Caco-2 (cell line): ENCODE measurements at regions of chr3 and their contacts with region 1.

Region 1: DNA sequence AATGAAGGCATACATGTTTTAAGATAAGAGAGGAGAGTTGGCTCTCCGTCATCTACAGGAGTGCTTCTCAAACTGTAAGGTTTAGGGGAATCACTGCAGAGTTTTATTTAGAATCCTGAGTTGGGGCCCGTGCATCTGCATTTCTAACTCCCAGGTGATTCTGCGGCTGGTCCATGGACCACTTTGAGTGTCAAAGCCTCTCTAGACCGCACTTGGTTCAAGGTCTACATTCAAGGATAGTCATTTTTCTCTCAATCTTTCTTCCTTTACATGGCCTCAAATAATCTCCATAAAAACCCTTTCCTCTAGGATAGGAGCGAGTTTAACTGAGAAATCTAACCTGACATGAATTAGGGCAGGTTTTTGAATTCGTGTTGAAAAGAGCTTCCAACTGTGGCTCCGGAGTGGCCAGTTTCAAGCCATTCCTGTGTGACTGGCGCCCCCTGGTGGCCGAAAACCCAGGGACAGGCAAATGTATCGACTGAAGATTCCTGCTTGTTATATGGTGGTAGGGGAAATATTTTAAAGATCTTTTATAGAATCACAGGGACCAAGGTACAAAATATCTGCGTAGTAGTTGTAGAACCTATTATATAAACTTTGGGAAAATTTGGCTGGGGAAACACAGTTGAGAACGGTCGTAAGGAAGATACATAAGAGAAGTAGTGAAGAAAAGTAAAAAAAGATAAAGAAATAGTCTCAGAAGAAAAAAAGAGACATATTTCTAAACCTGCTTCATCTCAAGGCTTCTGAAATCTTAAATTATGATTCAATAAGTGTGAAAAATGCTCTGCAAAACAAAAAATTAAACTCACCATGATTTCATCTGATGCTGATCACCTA is 11.9 kb downstream of the GABRR3 start:
- DNase-seq: peak; percentile 75 to 89
- H3K4me3 ChIP-seq: no peak overlapping the region
- H3K4me3 Mint-ChIP-seq: no peak overlapping the region
- H3K27ac Mint-ChIP-seq: no peak overlapping the region
- H3K4me1 ChIP-seq: no peaks in the 10 kb centered on the region
- H3K4me1 Mint-ChIP-seq: peaks cover 7% of the 10 kb centered on the region
- H3K27me3 ChIP-seq: no peaks in the 10 kb centered on the region
- H3K27me3 Mint-ChIP-seq: peaks cover 4% of the 10 kb centered on the region
- CTCF ChIP-seq: peak; percentile 87 to 94

Region 2: DNA sequence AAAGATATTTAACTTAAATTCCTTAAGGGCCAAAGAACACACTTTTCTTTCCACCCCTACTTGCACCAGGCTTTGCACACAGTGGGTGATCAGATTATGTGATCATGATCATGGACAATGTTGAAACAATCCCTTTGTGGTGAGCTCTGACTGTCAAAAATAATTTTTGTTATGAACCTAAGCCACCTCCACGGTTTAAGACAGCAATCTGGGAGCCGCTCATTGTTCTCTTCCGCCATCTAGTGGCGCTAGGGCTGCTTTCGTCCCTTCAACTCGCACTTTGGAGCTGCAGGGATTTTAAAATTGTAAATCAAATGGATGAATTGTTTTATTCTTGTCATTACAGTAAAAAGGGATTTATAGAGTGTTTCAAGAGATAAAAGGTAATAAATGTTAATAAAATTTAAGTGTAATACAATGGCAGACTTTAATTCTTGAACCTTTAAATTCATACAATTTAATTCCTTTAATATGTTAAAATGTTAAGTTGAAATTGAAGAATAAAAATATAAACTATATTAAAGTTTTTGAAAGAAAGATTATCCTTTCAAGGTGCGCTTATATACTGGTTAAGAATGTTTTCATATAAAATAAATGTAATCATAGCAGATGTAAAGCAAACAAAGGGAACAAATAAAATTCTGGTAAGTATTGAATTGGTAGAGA is 303.9 kb before region 1 on chr3:
- CTCF ChIA-PET with region 1: interaction called, 4 read pairs
- POLR2A ChIA-PET with region 1: no interaction called
- intact Hi-C with region 1: loop called (anchors 5 kb)
- DNase-seq: peak; percentile 57 to 69
- H3K4me3 ChIP-seq: no peak overlapping the region
- H3K4me3 Mint-ChIP-seq: no peak overlapping the region
- H3K27ac Mint-ChIP-seq: no peak overlapping the region
- H3K4me1 ChIP-seq: no peaks in the 10 kb centered on the region
- H3K4me1 Mint-ChIP-seq: no peaks in the 10 kb centered on the region
- H3K27me3 ChIP-seq: no peaks in the 10 kb centered on the region
- H3K27me3 Mint-ChIP-seq: peaks cover 6% of the 10 kb centered on the region
- CTCF ChIP-seq: peak; percentile 73 to 95

Region 3: GRCh38 chr3:97940034-97940433 is 83.2 kb before region 1 on chr3:
- CTCF ChIA-PET with region 1: no interaction called
- POLR2A ChIA-PET with region 1: no interaction called
- intact Hi-C with region 1: loop called (anchors 2 kb)
- DNase-seq: peak in 1 of 2 experiments; percentile 13
- H3K4me3 ChIP-seq: no peak overlapping the region
- H3K4me3 Mint-ChIP-seq: no peak overlapping the region
- H3K27ac Mint-ChIP-seq: no peak overlapping the region
- H3K4me1 ChIP-seq: no peaks in the 10 kb centered on the region; the same call in 1 of the 2 replicates
- H3K4me1 Mint-ChIP-seq: no peaks in the 10 kb centered on the region
- H3K27me3 ChIP-seq: no peaks in the 10 kb centered on the region
- H3K27me3 Mint-ChIP-seq: no peaks in the 10 kb centered on the region
- CTCF ChIP-seq: no peak

Region 4: GRCh38 chr3:97971677-97972567 is 51.3 kb before region 1 on chr3 and contains the start of gene RIOX2:
- CTCF ChIA-PET with region 1: interaction called, 3 read pairs
- POLR2A ChIA-PET with region 1: no interaction called
- intact Hi-C with region 1: loop called (anchors 5 kb)
- DNase-seq: peak; percentile 76 to 78
- H3K4me3 ChIP-seq: peak within 1 kb of the TSS; percentile 81
- H3K4me3 Mint-ChIP-seq: peak within 1 kb of the TSS; percentile 88
- H3K27ac Mint-ChIP-seq: peak within 1 kb of the TSS; percentile 94
- H3K4me1 ChIP-seq: peaks cover 20% of the 10 kb centered on the region
- H3K4me1 Mint-ChIP-seq: peaks cover 13% of the 10 kb centered on the region
- H3K27me3 ChIP-seq: no peaks in the 10 kb centered on the region
- H3K27me3 Mint-ChIP-seq: no peaks in the 10 kb centered on the region
- CTCF ChIP-seq: peak in 1 of 2 experiments; percentile 12
- total RNA-seq, gene RIOX2: 25.0 TPM in 2 replicates

Region 5: DNA sequence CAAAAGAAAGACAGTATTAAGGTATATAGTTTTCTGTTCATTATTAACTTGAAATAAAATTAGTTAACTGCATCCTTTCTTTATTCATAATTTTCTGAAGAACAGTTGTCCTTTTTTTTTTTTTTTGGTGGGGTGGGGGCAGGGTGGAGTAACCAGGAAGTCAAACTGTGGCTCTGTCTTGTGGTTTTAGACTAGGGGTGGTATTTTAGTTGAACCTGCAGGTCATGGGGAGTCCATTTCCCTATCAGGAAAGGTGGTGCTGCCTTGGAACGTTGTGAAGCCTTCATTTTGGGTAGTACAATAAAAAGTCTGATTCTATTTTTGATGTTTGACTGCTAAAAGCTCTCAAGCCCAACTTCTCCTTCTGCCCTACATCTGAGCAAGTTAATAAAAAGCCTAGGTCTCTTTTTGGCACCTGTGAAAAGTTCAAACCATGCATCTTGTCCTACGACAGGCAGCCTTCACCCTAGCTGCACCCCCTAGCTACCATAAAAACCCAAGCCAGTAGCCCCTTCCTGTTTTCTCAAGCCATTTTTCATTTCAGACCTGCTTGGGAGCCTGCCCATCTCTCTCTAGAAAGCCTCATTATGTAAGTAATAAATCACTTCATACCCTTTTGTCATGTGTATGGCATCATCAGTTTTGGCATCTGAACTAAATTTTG is 19.8 kb before region 1 on chr3:
- CTCF ChIA-PET with region 1: no interaction called
- POLR2A ChIA-PET with region 1: no interaction called
- intact Hi-C with region 1: no loop called
- DNase-seq: no peak
- H3K4me3 ChIP-seq: no peak overlapping the region
- H3K4me3 Mint-ChIP-seq: no peak overlapping the region
- H3K27ac Mint-ChIP-seq: no peak overlapping the region
- H3K4me1 ChIP-seq: no peaks in the 10 kb centered on the region
- H3K4me1 Mint-ChIP-seq: no peaks in the 10 kb centered on the region
- H3K27me3 ChIP-seq: no peaks in the 10 kb centered on the region
- H3K27me3 Mint-ChIP-seq: peaks cover 8% of the 10 kb centered on the region
- CTCF ChIP-seq: no peak